ENCODE measurements at regions of chr1 and their contacts with region 1.

Region 1: GRCh38 chr1:201828820-201829774 is at the start of gene IPO9:
- DNase-seq: peak; percentile 95
- H3K4me3 Mint-ChIP-seq: peak within 1 kb of the TSS; percentile 94
- H3K27ac Mint-ChIP-seq: peak within 1 kb of the TSS; percentile 97
- H3K4me1 Mint-ChIP-seq: peaks cover 40% of the 10 kb centered on the region
- H3K27me3 Mint-ChIP-seq: no peaks in the 10 kb centered on the region
- total RNA-seq, gene IPO9: 47.9 to 52.4 TPM

Region 2: DNA sequence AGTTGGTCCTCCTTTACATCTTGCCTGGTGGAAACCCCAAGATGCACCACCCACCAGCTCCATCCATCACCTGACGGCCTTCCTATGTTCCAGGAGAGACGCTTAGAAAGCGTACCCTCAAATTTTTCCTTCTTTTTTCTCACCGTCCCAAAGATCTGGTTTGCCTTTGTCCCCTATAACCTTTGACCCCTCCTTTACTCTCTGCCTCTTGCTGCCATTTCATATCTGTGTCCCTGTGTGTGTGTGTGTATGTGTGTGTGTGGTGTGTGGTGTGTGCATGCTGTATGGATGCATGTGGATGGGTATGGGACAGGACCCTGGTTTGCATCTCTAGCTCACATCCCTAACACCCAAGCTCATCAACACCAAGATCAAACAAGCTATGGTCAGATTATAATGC is 22.3 kb before region 1 on chr1:
- CTCF ChIA-PET with region 1: no interaction called
- POLR2A ChIA-PET with region 1: no interaction called
- DNase-seq: no peak
- H3K4me3 Mint-ChIP-seq: no peak overlapping the region
- H3K27ac Mint-ChIP-seq: no peak overlapping the region
- H3K4me1 Mint-ChIP-seq: no peaks in the 10 kb centered on the region
- H3K27me3 Mint-ChIP-seq: no peaks in the 10 kb centered on the region

Region 3: GRCh38 chr1:201845331-201846083 is 16.4 kb after region 1 on chr1:
- CTCF ChIA-PET with region 1: interaction called, 15 read pairs
- POLR2A ChIA-PET with region 1: no interaction called
- DNase-seq: no peak
- H3K4me3 Mint-ChIP-seq: no peak overlapping the region
- H3K27ac Mint-ChIP-seq: no peak overlapping the region
- H3K4me1 Mint-ChIP-seq: peaks cover 5% of the 10 kb centered on the region
- H3K27me3 Mint-ChIP-seq: no peaks in the 10 kb centered on the region

Measured in activated CD4-positive, alpha-beta T cell treated with anti-CD3 and anti-CD28 coated beads, Interleukin-2, amount 10 ng/mL, durations not matched to agents 7 days and 5 days (primary cell).